Vagina (tissue), 2 donors: ENCODE measurements at regions of chr9 and their contacts with region 1.

Region 1: GRCh38 chr9:75974016-75974766 is 83.7 kb downstream of the PCSK5 start:
- DNase-seq: no peak
- H3K4me3 ChIP-seq: no peak overlapping the region
- H3K27ac ChIP-seq: no peak overlapping the region
- H3K4me1 ChIP-seq: peaks cover 14% of the 10 kb centered on the region
- H3K27me3 ChIP-seq: no peaks in the 10 kb centered on the region
- CTCF ChIP-seq: no peak
- POLR2A ChIP-seq: no peak

Region 2: DNA sequence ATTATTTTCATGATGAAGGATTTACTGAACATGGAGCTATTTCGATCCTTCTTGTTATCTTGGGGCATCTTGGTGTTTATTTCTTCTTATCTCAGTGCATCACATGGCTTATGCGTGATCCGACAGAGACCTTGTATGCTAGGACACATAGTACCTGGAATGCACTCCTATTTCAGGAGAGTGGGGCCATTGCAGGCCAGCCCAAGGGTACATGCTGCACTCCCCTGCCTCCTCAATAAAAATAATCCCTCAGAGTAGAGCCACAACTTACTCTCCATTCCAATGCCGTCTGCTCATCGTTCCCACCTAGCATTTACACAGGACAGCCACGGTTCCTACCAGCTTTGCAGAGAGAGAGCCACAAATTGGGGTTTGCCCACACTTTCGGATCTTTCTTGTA is 40.2 kb before region 1 on chr9:
- intact Hi-C with region 1: loop called (anchors 2 kb)
- DNase-seq: no peak
- H3K4me3 ChIP-seq: no peak overlapping the region
- H3K27ac ChIP-seq: no peak overlapping the region
- H3K4me1 ChIP-seq: peaks cover 17% of the 10 kb centered on the region
- H3K27me3 ChIP-seq: no peaks in the 10 kb centered on the region
- CTCF ChIP-seq: no peak
- POLR2A ChIP-seq: no peak